Caco-2 (cell line): ENCODE measurements at regions of chr17 and their contacts with region 1.

Region 1: DNA sequence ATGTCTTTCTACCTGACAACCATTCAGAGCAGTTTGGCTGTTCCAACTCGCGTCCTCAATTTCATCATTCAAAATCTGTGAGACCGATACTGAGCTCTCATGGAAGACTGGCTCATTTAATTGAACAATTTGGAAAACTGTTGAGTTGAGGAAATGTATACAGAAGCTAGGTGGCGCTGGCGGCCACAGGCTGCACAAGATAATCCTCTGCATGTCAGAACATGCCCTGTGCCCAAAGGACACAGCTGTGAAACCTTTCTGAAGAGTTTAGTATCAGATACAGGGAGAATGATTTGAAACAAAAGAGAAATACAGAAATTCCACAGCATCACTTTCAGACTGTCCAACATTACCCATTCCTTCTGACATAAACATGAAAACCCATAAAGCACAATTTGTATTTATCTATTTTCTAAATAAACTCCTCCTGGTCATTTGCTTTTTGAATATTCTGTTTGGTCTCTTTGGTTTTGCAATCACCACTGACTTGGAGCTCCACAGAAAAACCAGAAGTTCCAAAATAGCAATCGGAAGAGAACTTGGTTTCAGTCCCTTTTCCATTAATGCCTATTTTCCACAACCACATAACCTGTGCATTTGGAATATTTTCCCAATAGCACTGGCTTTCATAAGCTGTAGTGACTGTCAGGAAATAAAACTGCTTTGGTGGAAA is 192.8 kb downstream of the MAP2K6 start:
- DNase-seq: peak; percentile 65 to 71
- H3K4me3 ChIP-seq: no peak overlapping the region
- H3K4me3 Mint-ChIP-seq: no peak overlapping the region
- H3K27ac Mint-ChIP-seq: no peak overlapping the region
- H3K4me1 ChIP-seq: peaks cover 14% of the 10 kb centered on the region
- H3K4me1 Mint-ChIP-seq: peaks cover 15% of the 10 kb centered on the region
- H3K27me3 ChIP-seq: no peaks in the 10 kb centered on the region
- H3K27me3 Mint-ChIP-seq: no peaks in the 10 kb centered on the region
- CTCF ChIP-seq: peak; percentile 71 to 75

Region 2: DNA sequence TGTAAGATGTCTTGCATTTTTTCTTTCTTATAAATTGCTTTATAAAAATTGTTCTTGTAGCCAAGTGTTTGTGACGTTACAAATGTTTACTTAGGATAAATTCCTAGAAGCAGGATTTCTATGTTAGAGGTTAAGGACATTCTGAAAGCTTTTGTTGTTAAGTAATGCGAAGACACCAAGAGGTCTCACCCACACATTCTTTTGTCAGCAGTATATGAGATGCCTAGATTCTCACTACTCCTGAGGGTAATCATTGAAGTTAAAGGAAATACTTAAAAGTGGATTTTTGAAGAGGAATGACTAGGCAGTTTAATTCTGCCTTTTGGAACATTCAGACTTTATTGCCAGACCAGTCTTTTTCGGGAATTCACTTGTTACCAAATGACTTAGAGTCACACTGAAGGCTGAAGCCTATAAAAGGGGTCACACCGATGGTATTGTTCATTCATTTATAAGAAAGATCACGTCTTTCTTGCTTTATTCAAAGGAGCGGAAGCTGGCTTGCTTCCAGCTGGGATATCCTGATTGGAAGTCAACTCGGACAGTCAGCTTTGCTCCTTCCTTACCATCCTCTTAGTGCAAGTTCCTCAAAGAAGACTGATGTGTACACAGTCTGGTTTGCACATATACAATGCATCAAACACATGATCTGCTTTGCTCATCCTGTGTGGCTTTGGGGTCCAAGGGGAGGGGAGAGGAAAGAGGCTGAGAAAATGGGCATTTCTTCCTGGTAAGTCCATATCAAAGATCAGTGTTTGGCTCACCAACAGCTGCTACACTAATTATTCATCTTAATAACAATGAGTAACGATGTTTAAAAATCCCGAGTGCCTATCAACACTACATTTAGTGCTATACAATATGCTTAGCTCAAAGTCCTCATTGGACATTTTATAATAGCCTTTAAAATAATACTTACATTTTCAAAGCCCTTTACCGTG is 32.8 kb before region 1 on chr17:
- CTCF ChIA-PET with region 1: interaction called, 3 read pairs
- POLR2A ChIA-PET with region 1: no interaction called
- intact Hi-C with region 1: loop called (anchors 1 kb)
- DNase-seq: no peak
- H3K4me3 ChIP-seq: no peak overlapping the region
- H3K4me3 Mint-ChIP-seq: no peak overlapping the region
- H3K27ac Mint-ChIP-seq: no peak overlapping the region
- H3K4me1 ChIP-seq: no peaks in the 10 kb centered on the region
- H3K4me1 Mint-ChIP-seq: no peaks in the 10 kb centered on the region
- H3K27me3 ChIP-seq: no peaks in the 10 kb centered on the region
- H3K27me3 Mint-ChIP-seq: peaks cover 8% of the 10 kb centered on the region
- CTCF ChIP-seq: no peak

Region 3: GRCh38 chr17:69679829-69680228 is 72.5 kb after region 1 on chr17:
- CTCF ChIA-PET with region 1: no interaction called
- POLR2A ChIA-PET with region 1: no interaction called
- intact Hi-C with region 1: no loop called
- DNase-seq: no peak
- H3K4me3 ChIP-seq: no peak overlapping the region
- H3K4me3 Mint-ChIP-seq: no peak overlapping the region
- H3K27ac Mint-ChIP-seq: no peak overlapping the region
- H3K4me1 ChIP-seq: no peaks in the 10 kb centered on the region
- H3K4me1 Mint-ChIP-seq: no peaks in the 10 kb centered on the region
- H3K27me3 ChIP-seq: no peaks in the 10 kb centered on the region
- H3K27me3 Mint-ChIP-seq: no peaks in the 10 kb centered on the region
- CTCF ChIP-seq: no peak

Region 4: DNA sequence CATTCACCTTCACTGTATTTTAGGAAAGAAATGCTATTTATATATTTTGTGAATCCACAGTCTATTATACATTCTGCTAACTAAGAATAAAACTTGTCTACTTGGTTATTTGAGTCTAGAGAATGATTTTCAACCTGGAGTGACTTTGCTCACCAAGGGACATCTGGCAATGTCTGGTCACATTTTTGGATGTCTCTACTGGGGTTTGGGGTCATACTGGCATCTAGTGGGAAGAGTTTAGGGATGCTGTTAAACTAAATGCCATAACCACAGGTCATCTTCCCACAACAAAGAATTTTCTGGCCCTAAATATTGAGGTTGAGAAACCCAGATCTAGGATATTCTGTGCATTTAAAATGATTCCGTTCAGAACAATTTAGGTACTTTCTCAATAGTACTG is 493.7 kb after region 1 on chr17:
- CTCF ChIA-PET with region 1: no interaction called
- POLR2A ChIA-PET with region 1: no interaction called
- intact Hi-C with region 1: loop called (anchors 2 kb)
- DNase-seq: peak in 1 of 2 experiments; percentile 16
- H3K4me3 ChIP-seq: no peak overlapping the region
- H3K4me3 Mint-ChIP-seq: no peak overlapping the region
- H3K27ac Mint-ChIP-seq: no peak overlapping the region
- H3K4me1 ChIP-seq: no peaks in the 10 kb centered on the region
- H3K4me1 Mint-ChIP-seq: peaks cover 9% of the 10 kb centered on the region
- H3K27me3 ChIP-seq: no peaks in the 10 kb centered on the region
- H3K27me3 Mint-ChIP-seq: no peaks in the 10 kb centered on the region
- CTCF ChIP-seq: peak; percentile 18 to 23

Region 5: GRCh38 chr17:70144260-70144846 is 537.1 kb after region 1 on chr17:
- CTCF ChIA-PET with region 1: no interaction called
- POLR2A ChIA-PET with region 1: no interaction called
- intact Hi-C with region 1: loop called (anchors 1 kb)
- DNase-seq: no peak
- H3K4me3 ChIP-seq: no peak overlapping the region
- H3K4me3 Mint-ChIP-seq: no peak overlapping the region
- H3K27ac Mint-ChIP-seq: no peak overlapping the region
- H3K4me1 ChIP-seq: no peaks in the 10 kb centered on the region
- H3K4me1 Mint-ChIP-seq: no peaks in the 10 kb centered on the region
- H3K27me3 ChIP-seq: no peaks in the 10 kb centered on the region
- H3K27me3 Mint-ChIP-seq: peaks cover 9% of the 10 kb centered on the region
- CTCF ChIP-seq: peak; percentile 52 to 71

Region 6: DNA sequence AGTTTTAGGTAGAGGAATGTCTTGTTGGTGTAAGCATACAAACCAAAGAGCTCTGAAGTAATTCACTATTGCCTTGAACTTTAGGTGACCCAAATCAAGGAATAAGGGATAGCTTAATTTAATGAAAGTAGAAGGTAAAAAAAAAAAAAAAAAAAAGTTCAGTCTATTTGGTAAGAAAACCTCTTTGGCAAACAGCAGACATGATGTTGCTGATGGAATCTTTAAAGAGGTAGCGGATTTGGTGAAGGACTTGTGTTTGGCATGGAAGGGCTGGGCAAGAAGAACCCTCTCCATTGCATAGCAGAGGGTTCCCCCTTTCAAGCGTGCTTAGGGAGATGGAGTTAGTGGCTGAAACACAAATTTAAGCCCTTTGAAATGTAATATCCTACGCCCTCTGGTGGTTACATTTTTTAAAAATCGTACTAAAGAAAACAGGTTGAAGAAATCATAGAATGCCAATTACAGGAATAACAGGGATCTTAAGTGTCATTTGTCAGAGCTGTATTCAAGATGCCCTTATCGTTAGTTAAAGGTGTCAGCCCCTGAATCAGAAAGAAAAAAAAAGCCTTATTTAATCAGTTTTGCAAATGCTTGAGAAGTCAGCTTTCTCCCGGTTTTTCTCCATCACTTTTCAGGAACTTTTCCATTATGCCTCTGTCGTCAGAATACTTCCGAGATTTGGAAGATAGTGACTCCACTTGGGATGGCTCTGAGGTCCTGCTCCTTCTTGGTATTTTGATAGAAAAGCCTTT is 945.1 kb after region 1 on chr17:
- CTCF ChIA-PET with region 1: no interaction called
- POLR2A ChIA-PET with region 1: no interaction called
- intact Hi-C with region 1: loop called (anchors 5 kb)
- DNase-seq: peak in 1 of 2 experiments; percentile 45
- H3K4me3 ChIP-seq: no peak overlapping the region
- H3K4me3 Mint-ChIP-seq: no peak overlapping the region
- H3K27ac Mint-ChIP-seq: no peak overlapping the region
- H3K4me1 ChIP-seq: no peaks in the 10 kb centered on the region
- H3K4me1 Mint-ChIP-seq: peaks cover 6% of the 10 kb centered on the region
- H3K27me3 ChIP-seq: no peaks in the 10 kb centered on the region
- H3K27me3 Mint-ChIP-seq: no peaks in the 10 kb centered on the region
- CTCF ChIP-seq: peak; percentile 47 to 70

Region 7: GRCh38 chr17:70622368-70623260 is 1015.3 kb after region 1 on chr17:
- CTCF ChIA-PET with region 1: interaction called, 3 read pairs
- POLR2A ChIA-PET with region 1: no interaction called
- intact Hi-C with region 1: loop called (anchors 2 kb)
- DNase-seq: peak; percentile 50 to 56
- H3K4me3 ChIP-seq: no peak overlapping the region
- H3K4me3 Mint-ChIP-seq: no peak overlapping the region
- H3K27ac Mint-ChIP-seq: no peak overlapping the region
- H3K4me1 ChIP-seq: no peaks in the 10 kb centered on the region
- H3K4me1 Mint-ChIP-seq: no peaks in the 10 kb centered on the region
- H3K27me3 ChIP-seq: no peaks in the 10 kb centered on the region
- H3K27me3 Mint-ChIP-seq: peaks cover 16% of the 10 kb centered on the region
- CTCF ChIP-seq: peak; percentile 67 to 80